ENCODE measurements at regions of chr16 and their contacts with region 1.

Region 1: GRCh38 chr16:9072806-9073341 is 18.6 kb upstream of the HAPSTR1 start:
- DNase-seq: no peak
- ATAC-seq: peak; percentile 45
- H3K4me3 Mint-ChIP-seq: no peak overlapping the region
- H3K27ac Mint-ChIP-seq: peak overlapping the region; percentile 65
- H3K4me1 Mint-ChIP-seq: peaks cover 22% of the 10 kb centered on the region
- H3K27me3 Mint-ChIP-seq: no peaks in the 10 kb centered on the region
- CTCF ChIP-seq: no peak

Region 2: DNA sequence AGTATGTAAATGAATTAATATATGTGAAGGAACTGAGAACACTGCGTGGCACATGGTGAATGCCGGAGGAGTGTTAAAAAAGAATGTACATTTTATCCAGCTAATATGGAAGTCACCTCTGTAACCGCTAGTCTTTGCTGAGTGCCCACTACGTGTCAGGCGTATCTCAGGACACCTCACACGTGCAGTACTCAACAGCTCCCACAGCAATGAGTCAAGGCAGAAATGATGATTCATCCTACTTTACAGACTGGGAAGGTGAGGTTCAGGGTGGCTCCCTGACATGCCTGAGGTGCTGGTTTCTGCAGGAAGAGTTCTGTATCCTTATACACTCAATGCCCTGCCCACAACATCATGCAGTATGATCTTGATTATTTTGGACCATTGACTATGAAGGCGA is 505.6 kb after region 1 on chr16:
- CTCF ChIA-PET with region 1: no interaction called
- POLR2A ChIA-PET with region 1: interaction called, 14 read pairs
- intact Hi-C with region 1: no loop called
- DNase-seq: no peak
- ATAC-seq: no peak
- H3K4me3 Mint-ChIP-seq: no peak overlapping the region
- H3K27ac Mint-ChIP-seq: no peak overlapping the region
- H3K4me1 Mint-ChIP-seq: no peaks in the 10 kb centered on the region
- H3K27me3 Mint-ChIP-seq: no peaks in the 10 kb centered on the region
- CTCF ChIP-seq: no peak

Measured in activated B cell treated with CpG ODN at 0.5 μM for 24 hours (primary cell).